Heart right ventricle (tissue), 16 donors: ENCODE measurements at regions of chr9 and their contacts with region 1.

Region 1: GRCh38 chr9:4382722-4383317 is 83.0 kb upstream of the GLIS3 start:
- DNase-seq: no peak
- ATAC-seq: peak in 3 of 8 donors; percentile 34 to 50 (median 47)
- H3K4me3 ChIP-seq: no peak overlapping the region
- H3K27ac ChIP-seq: no peak overlapping the region
- H3K4me1 ChIP-seq: no peaks in the 10 kb centered on the region
- H3K27me3 ChIP-seq: peaks cover 0 to 3% (median 0%) of the 10 kb centered on the region in 7 donors
- CTCF ChIP-seq: peak; percentile 12 to 75 (median 57)

Region 2: GRCh38 chr9:4548811-4549725 is 166.2 kb after region 1 on chr9:
- intact Hi-C with region 1: loop called in 1 of 10 experiments (anchors 10 kb)
- DNase-seq: peak; percentile 12 to 36
- ATAC-seq: peak in 6 of 8 donors; percentile 40 to 67 (median 64)
- H3K4me3 ChIP-seq: no peak overlapping the region
- H3K27ac ChIP-seq: peak overlapping the region in 6 of 10 donors; percentile 36 to 63 (median 55)
- H3K4me1 ChIP-seq: peaks cover 0 to 74% (median 33%) of the 10 kb centered on the region in 9 donors
- H3K27me3 ChIP-seq: no peaks in the 10 kb centered on the region
- CTCF ChIP-seq: peak in 7 of 9 donors; percentile 29 to 58 (median 43)

Region 3: GRCh38 chr9:4604678-4605095 is 221.9 kb after region 1 on chr9:
- intact Hi-C with region 1: loop called in 1 of 10 experiments (anchors 10 kb)
- DNase-seq: peak in 1 of 2 donors; percentile 80
- ATAC-seq: peak in 7 of 8 donors; percentile 58 to 85 (median 74)
- H3K4me3 ChIP-seq: no peak overlapping the region
- H3K27ac ChIP-seq: no peak overlapping the region
- H3K4me1 ChIP-seq: no peaks in the 10 kb centered on the region
- H3K27me3 ChIP-seq: no peaks in the 10 kb centered on the region
- CTCF ChIP-seq: peak; percentile 71 to 80 (median 75)

Region 4: GRCh38 chr9:4630836-4631235 is 248.0 kb after region 1 on chr9:
- intact Hi-C with region 1: loop called in 3 of 10 experiments (anchors 5 kb)
- DNase-seq: no peak
- ATAC-seq: no peak
- H3K4me3 ChIP-seq: no peak overlapping the region
- H3K27ac ChIP-seq: no peak overlapping the region
- H3K4me1 ChIP-seq: no peaks in the 10 kb centered on the region
- H3K27me3 ChIP-seq: no peaks in the 10 kb centered on the region
- CTCF ChIP-seq: no peak

Region 5: DNA sequence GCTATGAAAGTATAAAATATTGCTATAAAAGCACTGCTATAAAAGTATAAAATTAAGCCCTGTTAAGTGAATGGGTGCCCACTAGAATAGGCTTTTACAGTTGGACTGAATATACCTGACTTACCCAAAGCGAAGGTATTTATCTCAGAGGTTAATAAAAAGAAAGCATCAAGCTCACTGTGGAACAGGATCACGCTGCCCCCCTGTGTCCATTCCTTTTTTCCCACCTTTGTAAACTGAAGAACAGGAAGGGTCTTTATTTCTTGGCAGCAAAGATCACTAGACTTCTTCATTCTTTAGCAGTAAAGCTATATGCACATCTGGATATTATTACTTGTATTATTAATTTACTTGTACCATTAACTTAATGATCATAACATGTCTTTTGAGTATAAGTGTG is 257.2 kb after region 1 on chr9:
- intact Hi-C with region 1: loop called in 9 of 10 experiments (anchors 2 to 5 kb)
- DNase-seq: no peak
- ATAC-seq: peak in 1 of 8 donors; percentile 39
- H3K4me3 ChIP-seq: no peak overlapping the region
- H3K27ac ChIP-seq: no peak overlapping the region
- H3K4me1 ChIP-seq: no peaks in the 10 kb centered on the region
- H3K27me3 ChIP-seq: no peaks in the 10 kb centered on the region
- CTCF ChIP-seq: peak; percentile 15 to 72 (median 55)